ENCODE measurements at regions of chr7 and their contacts with region 1.

Region 1: DNA sequence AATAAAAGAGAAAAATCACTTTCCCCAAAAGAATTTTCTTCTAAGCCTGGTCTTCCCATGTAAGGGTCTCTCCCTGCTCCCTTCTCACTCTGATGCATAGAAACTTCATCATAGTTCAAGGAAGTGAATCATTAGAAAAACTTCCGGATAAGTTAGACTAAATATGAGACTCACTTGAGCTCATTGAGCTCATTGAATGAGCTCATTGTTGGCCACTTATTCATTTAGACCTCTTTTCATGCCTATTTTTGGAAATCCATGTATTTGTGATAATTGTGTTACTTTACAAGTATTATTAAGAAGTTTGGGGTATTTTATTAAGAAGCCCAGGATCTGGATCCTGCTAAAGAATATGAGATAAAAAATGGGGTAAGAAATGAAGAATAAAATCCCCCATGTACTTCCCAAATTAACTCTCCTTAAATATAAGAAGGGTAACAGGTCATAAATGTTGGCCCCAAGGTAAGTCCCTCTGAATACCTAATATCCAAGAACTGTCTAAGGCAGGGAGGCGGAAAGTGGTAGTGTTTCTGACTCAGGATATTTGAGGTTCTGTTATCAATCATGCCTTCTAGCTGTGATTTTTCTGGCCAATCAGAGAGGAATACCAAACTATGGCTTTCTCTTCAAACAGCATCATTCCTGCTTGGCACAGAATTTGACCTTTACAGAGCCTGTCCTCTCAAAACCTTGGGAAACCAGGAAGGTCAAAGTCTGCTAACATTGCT is 236.5 kb upstream of the PTN start:
- DNase-seq: no peak
- ATAC-seq: no peak
- H3K4me3 ChIP-seq: no peak overlapping the region
- H3K27ac ChIP-seq: no peak overlapping the region
- H3K4me1 ChIP-seq: no peaks in the 10 kb centered on the region
- H3K27me3 ChIP-seq: 0 out of 5 replicates have a peak, but pooled peaks cover 0 to 2% of the 10 kb centered on the region in 2 experiments
- CTCF ChIP-seq: no peak
- EP300 ChIP-seq: no peak
- POLR2A ChIP-seq: no peak
- RAD21 ChIP-seq: no peak

Region 2: DNA sequence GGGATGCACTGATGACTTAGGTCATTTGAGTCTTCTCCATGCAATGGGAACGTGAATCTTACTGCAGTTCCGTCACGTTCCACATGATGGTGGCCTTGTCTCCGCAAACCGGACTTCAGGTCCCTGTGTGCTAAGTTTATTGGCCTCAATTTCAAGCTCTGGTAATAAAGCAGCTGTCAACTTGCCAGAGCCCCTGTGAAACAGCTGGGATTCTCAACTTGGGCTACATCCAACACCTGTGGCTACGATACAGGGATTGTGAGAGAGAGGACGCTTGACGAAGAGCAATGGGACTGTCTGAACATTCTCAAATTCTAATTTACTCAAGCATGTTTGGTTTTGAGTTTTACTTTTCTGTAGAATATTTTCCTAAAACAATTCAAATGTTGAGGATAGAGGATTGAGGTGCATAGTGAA is 410.8 kb before region 1 on chr7:
- CTCF ChIA-PET with region 1: no interaction called
- POLR2A ChIA-PET with region 1: no interaction called
- in situ Hi-C with region 1: loop called (anchors 10 kb)
- intact Hi-C with region 1: no loop called
- DNase-seq: peak; percentile 26
- ATAC-seq: peak; percentile 93
- H3K4me3 ChIP-seq: no peak overlapping the region
- H3K27ac ChIP-seq: no peak overlapping the region
- H3K4me1 ChIP-seq: no peaks in the 10 kb centered on the region
- H3K27me3 ChIP-seq: 0 out of 5 replicates have a peak, but pooled peaks cover 0 to 4% of the 10 kb centered on the region in 2 experiments
- CTCF ChIP-seq: peak; percentile 81
- EP300 ChIP-seq: no peak
- POLR2A ChIP-seq: no peak
- RAD21 ChIP-seq: peak; percentile 45; the same call in 1 of the 2 replicates

Region 3: GRCh38 chr7:137601642-137602041 is 21.6 kb after region 1 on chr7:
- CTCF ChIA-PET with region 1: no interaction called
- POLR2A ChIA-PET with region 1: no interaction called
- in situ Hi-C with region 1: no loop called
- intact Hi-C with region 1: no loop called
- DNase-seq: no peak
- ATAC-seq: no peak
- H3K4me3 ChIP-seq: no peak overlapping the region
- H3K27ac ChIP-seq: no peak overlapping the region
- H3K4me1 ChIP-seq: no peaks in the 10 kb centered on the region
- H3K27me3 ChIP-seq: peaks cover 0 to 1% of the 10 kb centered on the region in 2 experiments; a peak in 2 of 5 replicates
- CTCF ChIP-seq: no peak
- EP300 ChIP-seq: no peak
- POLR2A ChIP-seq: no peak
- RAD21 ChIP-seq: no peak